Naive thymus-derived CD4-positive, alpha-beta T cell (primary cell): ENCODE measurements at regions of chr13 and their contacts with region 1.

Region 1: GRCh38 chr13:91375116-91375729 is 23.2 kb upstream of the GPC5 start:
- DNase-seq: peak in 5 of 9 donors; percentile 11 to 26 (median 19)
- ATAC-seq: peak; percentile 85
- H3K4me3 ChIP-seq: no peak overlapping the region
- H3K4me3 Mint-ChIP-seq: peak overlapping the region in 1 of 10 donors; percentile 14
- H3K27ac ChIP-seq: no peak overlapping the region
- H3K27ac Mint-ChIP-seq: no peak overlapping the region
- H3K4me1 ChIP-seq: no peaks in the 10 kb centered on the region
- H3K4me1 Mint-ChIP-seq: peaks cover 0 to 7% (median 3%) of the 10 kb centered on the region in 7 donors
- H3K27me3 ChIP-seq: no peaks in the 10 kb centered on the region
- H3K27me3 Mint-ChIP-seq: peaks cover 6 to 18% (median 13%) of the 10 kb centered on the region in 5 donors

Region 2: GRCh38 chr13:91406619-91407018 is 31.4 kb after region 1 on chr13:
- CTCF ChIA-PET with region 1: interaction called, 3 read pairs
- POLR2A ChIA-PET with region 1: no interaction called
- intact Hi-C with region 1: loop called in 1 of 2 experiments (anchors 1 kb)
- DNase-seq: peak in 1 of 9 donors; percentile 12
- ATAC-seq: no peak
- H3K4me3 ChIP-seq: no peak overlapping the region
- H3K4me3 Mint-ChIP-seq: no peak overlapping the region
- H3K27ac ChIP-seq: no peak overlapping the region
- H3K27ac Mint-ChIP-seq: peak overlapping the region in 1 of 9 donors; percentile 23
- H3K4me1 ChIP-seq: no peaks in the 10 kb centered on the region
- H3K4me1 Mint-ChIP-seq: peaks cover 0 to 2% (median 0%) of the 10 kb centered on the region in 7 donors
- H3K27me3 ChIP-seq: no peaks in the 10 kb centered on the region
- H3K27me3 Mint-ChIP-seq: peaks cover 8 to 59% (median 12%) of the 10 kb centered on the region in 5 donors

Region 3: DNA sequence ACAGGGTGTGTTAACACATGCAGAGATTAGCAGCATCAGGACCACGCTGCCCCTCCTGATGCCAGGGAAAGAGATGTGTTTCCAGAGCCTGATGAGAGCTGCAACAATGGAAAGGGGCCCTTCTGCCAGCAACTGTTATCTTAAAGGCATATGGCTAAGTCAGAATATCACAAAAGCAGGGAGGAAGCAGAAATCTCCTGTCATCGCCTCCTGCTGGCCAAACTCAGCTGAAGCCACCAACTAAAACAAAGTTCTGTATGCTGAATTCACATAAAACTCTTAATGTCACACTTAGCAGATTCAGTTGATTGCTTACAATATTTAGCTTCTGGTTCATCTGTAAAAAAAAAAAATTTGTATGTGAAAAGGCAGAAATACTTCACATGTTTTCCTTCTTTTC is 201.4 kb after region 1 on chr13:
- CTCF ChIA-PET with region 1: no interaction called
- POLR2A ChIA-PET with region 1: no interaction called
- intact Hi-C with region 1: loop called in 1 of 2 experiments (anchors 10 kb)
- DNase-seq: no peak
- ATAC-seq: no peak
- H3K4me3 ChIP-seq: no peak overlapping the region
- H3K4me3 Mint-ChIP-seq: no peak overlapping the region
- H3K27ac ChIP-seq: no peak overlapping the region
- H3K27ac Mint-ChIP-seq: no peak overlapping the region
- H3K4me1 ChIP-seq: no peaks in the 10 kb centered on the region
- H3K4me1 Mint-ChIP-seq: no peaks in the 10 kb centered on the region
- H3K27me3 ChIP-seq: no peaks in the 10 kb centered on the region
- H3K27me3 Mint-ChIP-seq: no peaks in the 10 kb centered on the region

Region 4: DNA sequence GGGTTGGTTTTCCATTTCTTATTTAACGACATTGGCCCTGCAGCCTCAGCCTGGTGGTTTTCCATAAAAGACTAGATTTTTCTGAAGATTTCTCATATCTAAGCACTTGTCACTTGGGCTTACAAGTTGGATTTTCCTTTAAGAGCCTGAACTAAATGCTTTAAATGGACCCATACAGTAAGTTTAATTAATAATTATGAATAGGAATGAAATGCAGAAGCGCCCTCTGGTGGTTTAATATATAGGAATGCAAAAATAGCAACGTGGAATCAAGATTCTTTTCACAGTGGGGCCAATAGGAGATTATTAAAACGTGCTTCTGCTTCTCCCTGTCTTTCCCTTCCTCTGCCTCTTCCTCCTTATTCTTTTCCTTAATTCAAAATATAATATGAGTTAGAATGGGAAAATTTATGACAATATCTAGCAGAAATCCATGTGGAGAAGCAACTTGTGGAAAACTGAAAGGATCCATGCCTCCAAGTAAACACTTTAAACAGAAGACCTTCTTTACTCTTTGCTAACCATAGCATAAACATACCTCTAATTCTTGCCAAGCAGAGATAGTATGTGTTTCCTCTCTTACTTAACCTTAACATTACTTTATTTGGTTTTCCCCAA is 347.2 kb after region 1 on chr13:
- CTCF ChIA-PET with region 1: interaction called, 3 read pairs
- POLR2A ChIA-PET with region 1: no interaction called
- intact Hi-C with region 1: loop called (anchors 1 to 2 kb)
- DNase-seq: peak in 5 of 9 donors; percentile 1 to 26 (median 10)
- ATAC-seq: no peak
- H3K4me3 ChIP-seq: no peak overlapping the region
- H3K4me3 Mint-ChIP-seq: no peak overlapping the region
- H3K27ac ChIP-seq: no peak overlapping the region
- H3K27ac Mint-ChIP-seq: no peak overlapping the region
- H3K4me1 ChIP-seq: no peaks in the 10 kb centered on the region
- H3K4me1 Mint-ChIP-seq: peaks cover 0 to 2% (median 0%) of the 10 kb centered on the region in 7 donors
- H3K27me3 ChIP-seq: no peaks in the 10 kb centered on the region
- H3K27me3 Mint-ChIP-seq: peaks cover 0 to 11% (median 2%) of the 10 kb centered on the region in 5 donors